ENCODE measurements at regions of chr1 and their contacts with region 1.

Region 1: DNA sequence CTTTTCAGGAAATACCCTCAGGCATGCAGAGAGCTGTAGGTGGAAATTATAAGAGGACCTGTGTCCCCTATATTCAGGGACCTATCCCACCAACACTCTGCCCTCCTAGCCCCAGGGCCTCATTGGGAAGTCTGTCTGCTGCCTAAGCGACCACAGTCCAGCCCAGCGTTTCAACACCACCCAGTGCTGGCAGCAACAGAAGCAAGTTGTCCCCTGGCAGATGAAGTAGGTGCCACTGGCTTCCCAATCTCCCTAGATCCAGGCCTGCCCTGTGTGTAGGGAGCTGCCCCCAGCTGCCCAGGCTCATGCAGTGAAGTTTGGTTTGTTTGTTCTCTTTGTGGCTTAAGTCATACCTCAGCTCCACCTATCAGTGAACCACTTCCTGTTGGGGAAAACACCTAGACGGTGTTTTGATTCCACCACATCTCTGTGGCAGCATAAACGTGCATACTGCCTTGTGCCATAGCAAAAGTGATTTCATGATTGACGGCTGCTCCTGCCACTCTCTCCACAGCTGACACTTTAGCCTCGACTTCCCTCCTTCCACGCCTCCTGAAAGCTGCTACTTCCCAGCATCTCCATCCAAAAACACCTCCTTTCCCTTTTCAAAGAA is 8.1 kb upstream of the LEFTY1 start:
- DNase-seq: peak; percentile 80
- ATAC-seq: peak; percentile 98
- H3K4me3 Mint-ChIP-seq: peak overlapping the region; percentile 59
- H3K27ac Mint-ChIP-seq: peak overlapping the region; percentile 95
- H3K4me1 Mint-ChIP-seq: peaks cover 42% of the 10 kb centered on the region
- H3K27me3 Mint-ChIP-seq: no peaks in the 10 kb centered on the region

Region 2: GRCh38 chr1:225299624-225300023 is 597.4 kb before region 1 on chr1:
- CTCF ChIA-PET with region 1: no interaction called
- POLR2A ChIA-PET with region 1: no interaction called
- intact Hi-C with region 1: no loop called
- DNase-seq: no peak
- ATAC-seq: no peak
- H3K4me3 Mint-ChIP-seq: no peak overlapping the region
- H3K27ac Mint-ChIP-seq: no peak overlapping the region
- H3K4me1 Mint-ChIP-seq: no peaks in the 10 kb centered on the region
- H3K27me3 Mint-ChIP-seq: peaks cover 3% of the 10 kb centered on the region

Region 3: DNA sequence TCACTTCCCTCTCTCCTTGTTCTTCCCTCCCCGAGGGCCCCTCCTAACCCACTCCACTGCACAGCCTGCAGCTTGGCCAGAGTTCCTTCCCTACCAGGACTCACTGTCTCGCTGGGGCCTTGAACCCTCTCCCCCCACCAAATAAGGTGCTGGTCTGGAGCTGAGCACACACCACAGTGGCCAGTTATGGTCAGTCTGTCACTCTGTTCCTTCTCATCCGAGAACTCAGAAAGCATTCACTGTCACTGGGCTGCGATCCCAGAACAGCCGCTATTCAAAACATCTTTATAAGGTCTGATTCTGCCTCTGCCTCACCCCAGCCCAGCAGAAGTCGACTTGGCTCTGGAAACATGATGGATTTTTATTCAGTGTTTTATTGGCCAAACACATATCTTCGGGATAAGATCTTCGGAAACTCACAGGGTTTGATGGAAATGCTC is 449.4 kb before region 1 on chr1:
- CTCF ChIA-PET with region 1: no interaction called
- POLR2A ChIA-PET with region 1: no interaction called
- intact Hi-C with region 1: loop called in 1 of 2 experiments (anchors 1 kb)
- DNase-seq: peak; percentile 1
- ATAC-seq: no peak
- H3K4me3 Mint-ChIP-seq: no peak overlapping the region
- H3K27ac Mint-ChIP-seq: peak overlapping the region; percentile 21
- H3K4me1 Mint-ChIP-seq: peaks cover 55% of the 10 kb centered on the region
- H3K27me3 Mint-ChIP-seq: no peaks in the 10 kb centered on the region

Region 4: GRCh38 chr1:225866061-225866837 is 30.8 kb before region 1 on chr1:
- CTCF ChIA-PET with region 1: interaction called, 3 read pairs
- POLR2A ChIA-PET with region 1: interaction called, 3 read pairs
- intact Hi-C with region 1: loop called in 1 of 2 experiments (anchors 1 kb)
- DNase-seq: peak; percentile 88
- ATAC-seq: peak; percentile 95
- H3K4me3 Mint-ChIP-seq: peak overlapping the region; percentile 28
- H3K27ac Mint-ChIP-seq: peak overlapping the region; percentile 82
- H3K4me1 Mint-ChIP-seq: peaks cover 43% of the 10 kb centered on the region
- H3K27me3 Mint-ChIP-seq: no peaks in the 10 kb centered on the region

Region 5: GRCh38 chr1:225911191-225912130 is 14.4 kb after region 1 on chr1:
- CTCF ChIA-PET with region 1: interaction called, 5 read pairs
- POLR2A ChIA-PET with region 1: no interaction called
- intact Hi-C with region 1: loop called in 1 of 2 experiments (anchors 1 kb)
- DNase-seq: peak; percentile 85
- ATAC-seq: peak; percentile 92
- H3K4me3 Mint-ChIP-seq: no peak overlapping the region
- H3K27ac Mint-ChIP-seq: no peak overlapping the region
- H3K4me1 Mint-ChIP-seq: peaks cover 18% of the 10 kb centered on the region
- H3K27me3 Mint-ChIP-seq: no peaks in the 10 kb centered on the region

Region 6: GRCh38 chr1:226074046-226074445 is 177.0 kb after region 1 on chr1:
- CTCF ChIA-PET with region 1: no interaction called
- POLR2A ChIA-PET with region 1: interaction called, 16 read pairs
- intact Hi-C with region 1: no loop called
- DNase-seq: no peak
- ATAC-seq: no peak
- H3K4me3 Mint-ChIP-seq: no peak overlapping the region
- H3K27ac Mint-ChIP-seq: no peak overlapping the region
- H3K4me1 Mint-ChIP-seq: peaks cover 22% of the 10 kb centered on the region
- H3K27me3 Mint-ChIP-seq: no peaks in the 10 kb centered on the region

Region 7: DNA sequence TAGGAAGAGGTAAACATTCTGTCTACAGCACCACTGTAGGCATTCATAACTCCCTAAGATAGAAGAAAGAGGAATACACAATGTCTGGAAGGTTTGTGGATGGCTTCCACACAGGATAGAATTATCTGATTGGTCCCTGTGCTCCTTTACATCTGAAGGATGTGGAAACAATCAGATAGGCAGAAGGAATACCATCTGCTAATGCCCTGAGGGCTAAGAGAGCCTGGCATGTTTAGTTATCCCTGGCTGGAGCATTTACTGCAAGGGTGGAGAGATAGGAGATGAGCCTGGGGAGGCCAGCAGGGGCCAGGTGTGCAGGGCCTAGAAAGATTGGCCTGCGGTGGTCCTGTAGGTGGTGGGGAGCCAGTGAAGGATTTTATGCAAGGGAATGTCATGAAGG is 298.1 kb after region 1 on chr1:
- CTCF ChIA-PET with region 1: no interaction called
- POLR2A ChIA-PET with region 1: no interaction called
- intact Hi-C with region 1: no loop called
- DNase-seq: no peak
- ATAC-seq: no peak
- H3K4me3 Mint-ChIP-seq: no peak overlapping the region
- H3K27ac Mint-ChIP-seq: no peak overlapping the region
- H3K4me1 Mint-ChIP-seq: no peaks in the 10 kb centered on the region
- H3K27me3 Mint-ChIP-seq: no peaks in the 10 kb centered on the region